ENCODE measurements at regions of chr6 and their contacts with region 1.

Region 1: DNA sequence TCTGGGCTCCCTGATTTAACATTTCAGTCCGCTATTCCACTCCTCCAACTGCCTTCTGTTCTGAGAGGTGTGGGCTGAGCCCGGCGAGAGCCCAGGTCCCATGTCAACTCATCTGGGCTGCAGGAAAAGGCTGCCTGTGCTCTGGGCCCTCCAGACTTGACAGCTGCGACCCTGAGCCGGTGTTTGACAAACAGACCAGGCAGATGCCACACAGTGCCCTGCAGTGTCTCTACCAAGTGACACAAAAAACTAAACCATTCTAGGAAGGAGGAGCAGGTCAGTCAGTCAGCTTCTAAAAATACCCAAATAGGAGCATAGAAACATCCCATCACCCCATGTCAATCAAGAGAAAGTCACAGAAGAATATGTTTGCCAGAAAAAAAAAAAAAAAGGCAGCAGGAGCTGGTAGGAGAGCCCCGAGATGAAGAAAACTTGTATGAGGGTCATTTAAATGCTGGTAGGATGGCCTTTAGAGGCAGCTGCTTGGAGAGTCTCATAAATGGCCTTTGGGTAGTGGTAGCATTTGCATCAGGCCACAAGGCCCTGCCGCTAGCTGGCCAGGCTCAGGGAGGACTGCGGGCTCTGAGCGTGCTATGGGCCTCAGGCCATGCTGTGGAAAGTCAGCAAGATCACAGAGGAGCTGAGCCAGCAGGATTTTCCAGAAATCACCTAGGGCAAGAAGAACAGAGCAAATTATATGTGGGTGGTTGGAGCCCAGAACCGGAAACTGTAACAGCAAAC is 36.6 kb upstream of the GFOD1 start:
- DNase-seq: peak; percentile 41 to 58
- ATAC-seq: peak; percentile 76 to 84
- H3K4me3 ChIP-seq: peak overlapping the region in 1 of 4 donors; percentile 19
- H3K27ac ChIP-seq: peak overlapping the region; percentile 80 to 100 (median 88)
- H3K4me1 ChIP-seq: peaks cover 47 to 52% of the 10 kb centered on the region in 2 donors
- H3K27me3 ChIP-seq: no peaks in the 10 kb centered on the region
- CTCF ChIP-seq: no peak
- POLR2A ChIP-seq: peak in 1 of 2 donors; percentile 49

Region 2: GRCh38 chr6:13217206-13217905 is 306.6 kb before region 1 on chr6:
- in situ Hi-C with region 1: no loop called
- intact Hi-C with region 1: no loop called
- DNase-seq: no peak
- ATAC-seq: no peak
- H3K4me3 ChIP-seq: no peak overlapping the region
- H3K27ac ChIP-seq: no peak overlapping the region
- H3K4me1 ChIP-seq: no peaks in the 10 kb centered on the region
- H3K27me3 ChIP-seq: no peaks in the 10 kb centered on the region
- CTCF ChIP-seq: no peak
- POLR2A ChIP-seq: no peak

Region 3: DNA sequence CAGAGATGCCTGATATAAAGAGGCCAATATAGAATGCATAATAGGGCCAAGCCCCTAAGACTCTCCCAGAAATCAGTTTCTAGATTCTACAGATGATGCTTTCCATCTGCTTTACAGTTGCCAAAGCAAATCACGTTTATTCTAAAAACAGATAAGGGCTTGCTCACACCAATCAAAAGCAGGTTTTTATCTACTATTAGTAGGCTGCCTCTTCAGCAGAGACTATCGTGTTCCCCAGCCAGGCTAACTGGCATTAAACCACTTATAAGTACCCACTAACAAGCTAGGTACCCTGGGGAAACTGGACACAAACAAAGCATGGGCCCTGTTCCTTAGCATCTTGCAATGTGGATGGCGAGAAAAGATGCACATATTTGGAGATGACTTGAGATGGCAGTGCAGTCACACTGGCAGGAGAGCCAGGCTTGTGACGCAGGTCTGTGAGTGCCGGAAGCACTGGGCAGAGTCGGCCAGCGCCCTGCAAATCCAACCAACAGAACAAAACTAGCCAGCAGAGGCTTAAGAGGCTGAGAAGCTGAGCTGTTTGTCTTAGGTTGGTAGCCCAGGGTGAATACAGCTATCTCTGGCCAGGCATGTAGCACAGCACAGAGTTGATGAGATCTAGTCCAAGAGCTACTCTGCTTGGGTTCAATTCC is 110.0 kb before region 1 on chr6:
- in situ Hi-C with region 1: loop called in 1 of 4 experiments (anchors 25 kb)
- intact Hi-C with region 1: loop called (anchors 2 kb)
- DNase-seq: peak; percentile 53 to 84
- ATAC-seq: peak; percentile 84 to 85
- H3K4me3 ChIP-seq: no peak overlapping the region
- H3K27ac ChIP-seq: peak overlapping the region; percentile 63 to 78 (median 70)
- H3K4me1 ChIP-seq: peaks cover 73% of the 10 kb centered on the region in 2 donors
- H3K27me3 ChIP-seq: no peaks in the 10 kb centered on the region
- CTCF ChIP-seq: peak in 3 of 5 experiments; percentile 19 to 32 (median 25)
- POLR2A ChIP-seq: no peak

Region 4: DNA sequence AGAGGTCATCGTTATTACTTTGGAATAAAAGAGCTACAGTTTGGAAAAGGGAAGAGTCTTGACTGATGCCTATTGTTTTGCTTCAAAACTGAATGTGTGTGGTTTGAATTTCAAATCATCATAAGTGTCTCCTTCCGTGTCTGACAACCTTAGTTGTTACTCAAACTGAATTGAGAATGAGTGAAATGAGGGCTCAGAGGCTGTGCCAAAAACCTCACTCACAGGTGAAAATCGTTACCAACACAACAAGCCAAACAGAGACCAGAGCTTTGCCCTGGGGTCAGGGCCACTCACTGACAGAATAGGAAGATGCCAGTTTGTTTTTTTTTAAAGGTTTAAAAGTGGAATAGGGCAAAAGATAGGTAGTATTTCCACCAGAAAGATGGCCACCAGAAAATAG is 35.3 kb after region 1 on chr6:
- in situ Hi-C with region 1: no loop called
- intact Hi-C with region 1: no loop called
- DNase-seq: no peak
- ATAC-seq: no peak
- H3K4me3 ChIP-seq: no peak overlapping the region
- H3K27ac ChIP-seq: no peak overlapping the region
- H3K4me1 ChIP-seq: peaks cover 0 to 6% of the 10 kb centered on the region in 2 donors
- H3K27me3 ChIP-seq: no peaks in the 10 kb centered on the region
- CTCF ChIP-seq: no peak
- POLR2A ChIP-seq: no peak

Measured in gastrocnemius medialis (tissue), 4 donors.